Activated CD8-positive, alpha-beta T cell treated with anti-CD3 and anti-CD28 coated beads for 36 hours (primary cell): ENCODE measurements at regions of chrX and their contacts with region 1.

Region 1: GRCh38 chrX:71118032-71118984 is at the start of gene MED12:
- DNase-seq: peak; percentile 92
- ATAC-seq: peak; percentile 99
- H3K4me3 Mint-ChIP-seq: peak within 1 kb of the TSS; percentile 79
- H3K27ac Mint-ChIP-seq: peak within 1 kb of the TSS; percentile 85
- H3K4me1 Mint-ChIP-seq: peaks cover 28% of the 10 kb centered on the region
- H3K27me3 Mint-ChIP-seq: no peaks in the 10 kb centered on the region
- CTCF ChIP-seq: no peak
- total RNA-seq, gene MED12: 49.2 to 52.0 TPM

Region 2: DNA sequence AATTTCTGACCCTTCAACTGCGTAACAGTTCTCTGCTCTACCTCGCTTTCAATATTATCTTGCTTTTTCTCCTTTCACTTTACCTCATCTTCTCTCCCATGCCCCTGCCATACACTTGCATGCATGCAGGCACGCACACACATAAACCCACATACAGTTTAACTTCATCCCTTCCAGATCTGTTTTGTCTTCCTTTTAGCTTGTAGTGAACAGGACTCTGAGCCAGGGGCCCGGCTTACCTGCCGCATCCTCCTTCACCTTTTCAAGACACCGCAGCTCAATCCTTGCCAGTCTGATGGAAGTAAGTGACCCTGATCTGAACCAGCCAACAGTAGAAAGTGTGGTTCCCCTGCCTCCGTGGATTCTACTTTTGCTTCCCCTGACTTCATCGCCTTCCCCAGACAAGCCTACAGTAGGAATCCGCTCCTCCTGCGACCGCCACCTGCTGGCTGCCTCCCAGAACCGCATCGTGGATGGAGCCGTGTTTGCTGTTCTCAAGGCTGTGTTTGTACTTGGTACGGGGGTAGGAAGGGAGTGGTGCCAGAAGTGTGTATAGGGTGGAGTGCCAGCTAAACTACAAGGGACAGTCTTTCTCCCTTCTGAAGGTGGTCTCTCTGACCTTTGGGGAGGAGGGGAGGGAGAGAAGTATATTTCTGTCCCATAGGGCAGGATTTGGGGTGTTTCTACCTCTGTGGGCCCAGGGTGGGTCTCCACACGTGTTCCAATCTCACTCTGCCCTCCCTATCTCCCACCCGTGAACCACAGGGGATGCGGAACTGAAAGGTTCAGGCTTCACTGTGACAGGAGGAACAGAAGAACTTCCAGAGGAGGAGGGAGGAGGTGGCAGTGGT is 10.8 kb after region 1 on chrX:
- CTCF ChIA-PET with region 1: interaction called, 17 read pairs
- POLR2A ChIA-PET with region 1: interaction called, 3 read pairs
- intact Hi-C with region 1: no loop called
- DNase-seq: peak; percentile 77
- ATAC-seq: peak; percentile 93
- H3K4me3 Mint-ChIP-seq: peak overlapping the region; percentile 63
- H3K27ac Mint-ChIP-seq: peak overlapping the region; percentile 75
- H3K4me1 Mint-ChIP-seq: peaks cover 21% of the 10 kb centered on the region
- H3K27me3 Mint-ChIP-seq: no peaks in the 10 kb centered on the region
- CTCF ChIP-seq: peak; percentile 68